ENCODE measurements at regions of chr2 and their contacts with region 1.

Region 1: GRCh38 chr2:236180831-236181453 is 12.8 kb upstream of the GBX2 start:
- DNase-seq: no peak
- H3K4me3 Mint-ChIP-seq: no peak overlapping the region
- H3K27ac Mint-ChIP-seq: peak overlapping the region; percentile 84
- H3K4me1 Mint-ChIP-seq: no peaks in the 10 kb centered on the region
- H3K27me3 Mint-ChIP-seq: peaks cover 42% of the 10 kb centered on the region

Region 2: GRCh38 chr2:235493775-235494715 is 686.9 kb before region 1 on chr2 and contains the start of gene AGAP1:
- intact Hi-C with region 1: loop called (anchors 10 kb)
- DNase-seq: no peak
- H3K4me3 Mint-ChIP-seq: peak within 1 kb of the TSS; percentile 87
- H3K27ac Mint-ChIP-seq: peak within 1 kb of the TSS; percentile 80
- H3K4me1 Mint-ChIP-seq: peaks cover 10% of the 10 kb centered on the region
- H3K27me3 Mint-ChIP-seq: peaks cover 47% of the 10 kb centered on the region
- total RNA-seq, gene AGAP1: 2.0 and 2.9 TPM in 2 replicates

Region 3: GRCh38 chr2:235669983-235670962 is 510.7 kb before region 1 on chr2:
- intact Hi-C with region 1: loop called (anchors 5 kb)
- DNase-seq: no peak
- H3K4me3 Mint-ChIP-seq: no peak overlapping the region
- H3K27ac Mint-ChIP-seq: no peak overlapping the region
- H3K4me1 Mint-ChIP-seq: no peaks in the 10 kb centered on the region
- H3K27me3 Mint-ChIP-seq: peaks cover 53% of the 10 kb centered on the region

Region 4: DNA sequence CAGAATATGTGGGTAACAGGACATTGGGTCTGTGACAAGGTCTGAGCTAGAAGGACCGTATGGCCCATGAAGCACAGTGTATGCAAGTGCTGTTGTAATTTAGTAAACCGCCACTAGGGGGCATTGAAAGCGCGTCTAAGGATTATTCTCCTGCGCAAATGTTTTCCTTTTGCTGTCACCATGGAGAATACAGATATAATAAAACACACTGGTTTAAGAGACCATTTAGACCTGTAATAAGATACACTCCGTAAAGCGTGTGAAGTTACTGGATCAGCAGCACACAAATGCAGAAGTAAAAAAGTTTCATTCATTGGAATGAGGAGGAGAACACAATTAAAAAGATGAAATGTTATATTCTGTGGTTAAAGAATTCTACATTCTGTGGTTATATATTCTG is 414.7 kb before region 1 on chr2:
- intact Hi-C with region 1: loop called (anchors 1 kb)
- DNase-seq: peak; percentile 8
- H3K4me3 Mint-ChIP-seq: no peak overlapping the region
- H3K27ac Mint-ChIP-seq: no peak overlapping the region
- H3K4me1 Mint-ChIP-seq: no peaks in the 10 kb centered on the region
- H3K27me3 Mint-ChIP-seq: peaks cover 4% of the 10 kb centered on the region

Region 5: DNA sequence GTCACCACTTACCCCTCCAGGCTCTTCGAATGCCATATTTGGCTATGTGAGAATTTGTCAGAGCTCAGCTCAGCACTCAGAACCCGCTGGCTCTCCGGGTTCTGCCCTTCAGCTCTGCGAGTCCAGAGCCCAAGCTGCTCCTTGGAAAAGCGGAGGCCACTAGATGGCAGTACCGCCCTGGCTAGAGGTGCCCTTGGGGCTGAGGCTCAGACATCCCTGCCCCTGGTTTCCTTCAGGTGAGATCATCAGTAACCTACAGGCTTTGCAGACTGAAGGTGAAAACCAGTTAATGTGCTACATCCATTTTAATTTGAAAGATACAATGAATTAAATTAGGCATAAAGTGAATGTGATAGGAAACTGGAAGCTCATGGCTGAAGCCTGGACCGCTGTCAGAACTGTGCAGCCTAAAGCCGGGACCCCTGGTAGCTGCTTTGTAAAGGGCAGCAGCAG is 401.5 kb before region 1 on chr2:
- intact Hi-C with region 1: loop called (anchors 1 kb)
- DNase-seq: peak; percentile 35
- H3K4me3 Mint-ChIP-seq: no peak overlapping the region
- H3K27ac Mint-ChIP-seq: no peak overlapping the region
- H3K4me1 Mint-ChIP-seq: no peaks in the 10 kb centered on the region
- H3K27me3 Mint-ChIP-seq: peaks cover 2% of the 10 kb centered on the region

Region 6: GRCh38 chr2:236164201-236164982 is 16.6 kb before region 1 on chr2:
- intact Hi-C with region 1: loop called (anchors 2 kb)
- DNase-seq: no peak
- H3K4me3 Mint-ChIP-seq: no peak overlapping the region
- H3K27ac Mint-ChIP-seq: peak overlapping the region; percentile 40
- H3K4me1 Mint-ChIP-seq: peaks cover 6% of the 10 kb centered on the region
- H3K27me3 Mint-ChIP-seq: peaks cover 51% of the 10 kb centered on the region

Region 7: GRCh38 chr2:236193051-236193450 is 12.1 kb after region 1 on chr2:
- intact Hi-C with region 1: no loop called
- DNase-seq: no peak
- H3K4me3 Mint-ChIP-seq: no peak overlapping the region
- H3K27ac Mint-ChIP-seq: no peak overlapping the region
- H3K4me1 Mint-ChIP-seq: no peaks in the 10 kb centered on the region
- H3K27me3 Mint-ChIP-seq: no peaks in the 10 kb centered on the region

Region 8: GRCh38 chr2:236236559-236237452 is 55.9 kb after region 1 on chr2:
- intact Hi-C with region 1: loop called (anchors 5 kb)
- DNase-seq: no peak
- H3K4me3 Mint-ChIP-seq: no peak overlapping the region
- H3K27ac Mint-ChIP-seq: no peak overlapping the region
- H3K4me1 Mint-ChIP-seq: no peaks in the 10 kb centered on the region
- H3K27me3 Mint-ChIP-seq: peaks cover 30% of the 10 kb centered on the region